Activated naive CD4-positive, alpha-beta T cell treated with anti-CD3 and anti-CD28 coated beads for 36 hours (primary cell): ENCODE measurements at regions of chr5 and their contacts with region 1.

Region 1: DNA sequence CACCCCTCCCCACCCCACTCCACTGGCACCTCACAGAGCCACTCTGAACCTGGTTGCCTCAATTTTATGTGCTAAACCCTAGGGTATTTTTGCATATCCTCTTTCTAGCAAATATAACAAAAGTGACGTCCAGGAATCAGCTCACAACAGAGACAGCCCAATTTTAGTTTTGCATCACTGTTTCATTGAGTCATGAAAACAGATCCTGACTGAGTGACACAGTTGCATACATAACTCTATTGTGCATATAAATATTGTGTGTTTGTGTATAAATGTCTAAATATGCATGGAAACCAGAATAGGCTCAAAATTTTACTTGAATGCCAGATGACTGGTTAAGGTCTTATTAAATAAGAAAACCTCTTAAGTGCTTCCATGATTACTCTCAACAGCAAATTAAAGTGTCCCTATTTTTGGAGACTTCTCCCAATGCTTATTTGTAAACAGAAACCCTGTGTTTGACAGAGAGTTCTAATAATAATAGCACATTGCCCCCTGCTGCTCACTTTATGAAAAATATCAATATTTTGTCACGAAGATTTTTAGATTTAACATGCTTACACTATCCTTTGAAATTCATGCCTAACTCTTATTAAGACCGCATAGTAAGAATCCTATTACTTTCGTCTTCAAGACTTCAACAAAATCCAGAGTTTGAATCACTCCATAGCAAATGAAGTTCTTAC is 75.5 kb upstream of the PRRC1 start:
- DNase-seq: no peak
- H3K4me3 Mint-ChIP-seq: no peak overlapping the region
- H3K27ac Mint-ChIP-seq: no peak overlapping the region
- H3K4me1 Mint-ChIP-seq: no peaks in the 10 kb centered on the region
- H3K27me3 Mint-ChIP-seq: peaks cover 4% of the 10 kb centered on the region

Region 2: DNA sequence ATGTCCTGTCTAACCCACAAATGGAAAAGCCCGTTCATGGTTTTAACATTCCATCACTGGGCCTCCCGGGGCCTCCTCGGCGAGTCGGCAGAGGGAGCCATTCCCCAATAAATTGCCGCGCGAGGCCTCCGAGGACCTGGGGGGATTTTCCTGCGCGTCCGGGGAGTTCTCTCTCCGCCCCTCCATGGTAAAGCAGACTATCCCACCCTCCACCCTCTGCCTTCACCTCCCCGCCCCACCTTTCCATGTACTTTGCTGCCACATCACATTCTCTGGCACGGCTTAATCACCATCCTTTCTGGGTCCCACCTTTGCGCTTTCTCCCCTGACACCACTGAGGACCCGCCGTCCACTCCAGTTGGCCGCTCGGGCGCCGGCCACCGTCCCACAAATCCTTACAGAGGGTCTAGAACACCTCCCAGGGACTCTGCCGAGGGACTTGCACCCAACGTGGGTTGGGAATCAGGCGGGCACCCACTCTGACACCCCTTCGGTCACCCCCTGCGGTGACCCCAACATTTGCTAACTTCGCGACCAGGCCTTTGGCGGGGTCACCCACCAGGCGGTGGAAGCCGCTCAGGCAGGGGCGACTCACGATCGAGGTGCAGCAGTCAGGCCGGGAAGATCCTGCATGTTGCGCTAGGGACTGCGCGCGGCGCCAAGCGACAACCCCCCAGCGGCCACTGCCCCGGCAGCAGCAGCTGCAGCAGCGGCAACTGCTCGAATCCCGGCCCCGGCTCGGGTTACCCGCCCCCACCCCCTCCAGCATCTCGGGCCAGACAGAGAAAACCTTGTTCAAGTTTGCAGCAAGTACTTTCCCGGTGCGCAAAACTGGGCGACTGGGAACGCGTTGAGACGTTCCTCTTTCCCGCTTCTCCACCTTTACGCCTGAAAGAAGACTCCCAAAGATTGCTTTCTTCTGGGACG is 151.7 kb before region 1 on chr5 and contains the start of gene MEGF10:
- CTCF ChIA-PET with region 1: no interaction called
- intact Hi-C with region 1: loop called (anchors 5 kb)
- DNase-seq: peak; percentile 42
- H3K4me3 Mint-ChIP-seq: peak within 1 kb of the TSS; percentile 19
- H3K27ac Mint-ChIP-seq: no peak within 1 kb of the TSS
- H3K4me1 Mint-ChIP-seq: peaks cover 13% of the 10 kb centered on the region
- H3K27me3 Mint-ChIP-seq: peaks cover 49% of the 10 kb centered on the region
- total RNA-seq, gene MEGF10: not detected

Region 3: GRCh38 chr5:127774961-127775360 is 333.0 kb after region 1 on chr5:
- CTCF ChIA-PET with region 1: no interaction called
- intact Hi-C with region 1: no loop called
- DNase-seq: no peak
- H3K4me3 Mint-ChIP-seq: no peak overlapping the region
- H3K27ac Mint-ChIP-seq: no peak overlapping the region
- H3K4me1 Mint-ChIP-seq: no peaks in the 10 kb centered on the region
- H3K27me3 Mint-ChIP-seq: peaks cover 10% of the 10 kb centered on the region